IMR-90 (cell line): ENCODE measurements at regions of chr13 and their contacts with region 1.

Region 1: DNA sequence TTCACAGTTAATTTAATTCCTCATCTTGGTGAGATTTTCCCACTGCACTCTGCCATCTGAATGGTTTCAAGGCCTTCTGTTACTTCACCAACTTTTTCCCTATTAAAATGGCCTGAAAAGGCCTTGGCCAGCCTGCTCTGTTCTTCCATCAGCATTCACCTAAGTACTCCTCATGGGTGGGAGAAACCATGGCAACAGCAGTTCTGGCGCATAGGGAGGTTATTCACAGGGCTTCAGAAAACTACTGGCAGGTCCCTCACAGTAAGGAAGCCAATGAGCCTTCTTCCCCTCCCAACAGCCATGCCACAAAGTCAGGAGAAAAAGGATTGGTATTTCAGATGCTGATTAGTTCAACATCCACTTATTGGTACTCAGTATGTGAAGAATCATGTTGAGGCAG is 17.2 kb upstream of the GJB2 start:
- DNase-seq: no peak
- ATAC-seq: no peak
- H3K4me3 ChIP-seq: no peak overlapping the region
- H3K27ac ChIP-seq: no peak overlapping the region
- H3K4me1 ChIP-seq: no peaks in the 10 kb centered on the region
- H3K27me3 ChIP-seq: peaks cover 37% of the 10 kb centered on the region
- CTCF ChIP-seq: no peak
- POLR2A ChIP-seq: no peak
- RAD21 ChIP-seq: no peak

Region 2: GRCh38 chr13:20294497-20294896 is 84.5 kb after region 1 on chr13:
- CTCF ChIA-PET with region 1: no interaction called
- POLR2A ChIA-PET with region 1: no interaction called
- dilution Hi-C with region 1: no loop called
- in situ Hi-C with region 1: no loop called
- intact Hi-C with region 1: loop called (anchors 10 kb)
- DNase-seq: no peak
- ATAC-seq: no peak
- H3K4me3 ChIP-seq: no peak overlapping the region
- H3K27ac ChIP-seq: no peak overlapping the region
- H3K4me1 ChIP-seq: no peaks in the 10 kb centered on the region
- H3K27me3 ChIP-seq: peaks cover 25% of the 10 kb centered on the region
- CTCF ChIP-seq: no peak
- POLR2A ChIP-seq: no peak
- RAD21 ChIP-seq: no peak

Region 3: DNA sequence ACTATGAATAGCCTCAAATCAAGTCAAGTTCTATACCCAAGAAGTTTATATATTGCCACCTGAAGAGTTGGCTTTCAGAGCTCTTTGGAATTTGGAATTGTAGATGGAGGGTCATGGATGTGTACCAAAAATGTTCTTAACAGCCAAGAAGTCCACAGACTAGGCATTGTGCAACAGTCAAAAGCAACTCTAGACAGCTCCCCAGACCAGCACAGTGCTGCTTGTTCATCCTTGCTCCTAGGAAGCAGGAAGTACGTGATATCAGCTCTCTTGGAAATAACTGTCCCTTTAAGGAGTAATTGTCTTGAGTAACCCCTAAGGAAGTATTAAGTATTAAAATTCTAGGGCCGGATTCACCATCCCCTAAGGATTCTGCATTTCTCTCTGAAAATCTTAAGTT is 462.8 kb after region 1 on chr13:
- CTCF ChIA-PET with region 1: no interaction called
- POLR2A ChIA-PET with region 1: no interaction called
- dilution Hi-C with region 1: no loop called
- in situ Hi-C with region 1: no loop called
- intact Hi-C with region 1: no loop called
- DNase-seq: peak; percentile 28
- ATAC-seq: peak; percentile 46
- H3K4me3 ChIP-seq: no peak overlapping the region
- H3K27ac ChIP-seq: no peak overlapping the region
- H3K4me1 ChIP-seq: peaks cover 2% of the 10 kb centered on the region; the same call in 1 of the 2 replicates
- H3K27me3 ChIP-seq: no peaks in the 10 kb centered on the region
- CTCF ChIP-seq: no peak
- POLR2A ChIP-seq: no peak
- RAD21 ChIP-seq: no peak